H1 (cell line): ENCODE measurements at regions of chr7 and their contacts with region 1.

Region 1: GRCh38 chr7:73522105-73522872 is at the start of gene BAZ1B:
- DNase-seq: peak; percentile 92 to 98
- H3K4me3 ChIP-seq: peak within 1 kb of the TSS; percentile 79 to 91 (median 82)
- H3K27ac ChIP-seq: peak within 1 kb of the TSS; percentile 98
- H3K4me1 ChIP-seq: peaks cover 0 to 5% (median 2%) of the 10 kb centered on the region in 4 experiments; a peak in 2 of 7 replicates
- H3K27me3 ChIP-seq: no peaks in the 10 kb centered on the region
- CTCF ChIP-seq: no peak; a peak in 1 of 4 replicates
- EP300 ChIP-seq: no peak
- POLR2A ChIP-seq: peak; percentile 80 to 85
- RAD21 ChIP-seq: no peak; a peak in 1 of 4 replicates
- total RNA-seq, gene BAZ1B: 83.6 and 86.8 TPM in 2 replicates

Region 2: DNA sequence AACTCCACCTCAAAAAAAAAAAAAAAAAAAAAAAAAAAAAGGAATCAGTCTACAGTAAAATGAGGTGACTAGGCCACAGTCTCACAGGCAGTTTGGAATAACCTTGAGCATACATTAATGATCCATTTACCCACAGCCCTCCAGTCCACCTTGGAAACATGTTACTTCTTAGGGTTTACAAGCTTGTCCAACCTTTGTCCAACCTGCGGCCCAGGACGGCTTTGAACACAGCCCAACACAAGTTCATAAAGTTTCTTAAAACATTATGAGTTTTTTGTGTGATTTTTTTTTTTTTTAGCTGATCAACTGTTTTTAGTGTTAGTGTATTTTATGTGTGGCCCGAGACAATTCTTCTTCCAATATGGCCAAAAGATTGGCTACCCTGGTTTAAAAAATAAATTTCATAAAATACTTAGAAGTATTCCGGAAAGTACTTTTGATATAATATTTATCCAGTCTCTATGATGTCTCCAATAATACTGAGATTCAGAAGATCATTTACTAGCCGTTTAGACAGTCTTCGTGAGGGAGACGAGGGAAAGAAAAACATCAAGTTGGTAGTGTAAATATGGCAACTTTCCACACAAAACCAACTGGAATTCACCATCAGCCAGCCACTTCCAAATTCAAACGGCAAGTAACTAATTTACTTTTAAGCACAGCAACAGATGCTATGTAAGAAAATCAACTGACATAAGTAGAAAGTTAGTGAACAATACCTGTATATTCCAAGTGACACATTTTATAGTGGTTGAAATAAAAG is 10.1 kb before region 1 on chr7:
- CTCF ChIA-PET with region 1: interaction called, 3 read pairs
- POLR2A ChIA-PET with region 1: interaction called, 55 read pairs
- DNase-seq: no peak
- H3K4me3 ChIP-seq: no peak overlapping the region
- H3K27ac ChIP-seq: no peak overlapping the region
- H3K4me1 ChIP-seq: no peaks in the 10 kb centered on the region
- H3K27me3 ChIP-seq: no peaks in the 10 kb centered on the region
- CTCF ChIP-seq: no peak
- EP300 ChIP-seq: no peak
- POLR2A ChIP-seq: no peak
- RAD21 ChIP-seq: no peak

Region 3: GRCh38 chr7:73533742-73534141 is 11.5 kb after region 1 on chr7:
- CTCF ChIA-PET with region 1: no interaction called
- POLR2A ChIA-PET with region 1: interaction called, 32 read pairs
- DNase-seq: no peak
- H3K4me3 ChIP-seq: no peak overlapping the region
- H3K27ac ChIP-seq: no peak overlapping the region; the same call in 1 of the 2 replicates
- H3K4me1 ChIP-seq: no peaks in the 10 kb centered on the region
- H3K27me3 ChIP-seq: no peaks in the 10 kb centered on the region
- CTCF ChIP-seq: no peak
- EP300 ChIP-seq: no peak
- POLR2A ChIP-seq: no peak
- RAD21 ChIP-seq: no peak

Region 4: GRCh38 chr7:73557108-73557396 is 34.8 kb after region 1 on chr7:
- CTCF ChIA-PET with region 1: interaction called, 4 read pairs
- POLR2A ChIA-PET with region 1: interaction called, 31 read pairs
- DNase-seq: peak; percentile 81 to 95
- H3K4me3 ChIP-seq: peak overlapping the region; percentile 68 to 87 (median 76)
- H3K27ac ChIP-seq: peak overlapping the region; percentile 99
- H3K4me1 ChIP-seq: peaks cover 0 to 3% (median 1%) of the 10 kb centered on the region in 4 experiments; a peak in 2 of 7 replicates
- H3K27me3 ChIP-seq: peaks cover 0 to 8% (median 1%) of the 10 kb centered on the region in 4 experiments; a peak in 4 of 7 replicates
- CTCF ChIP-seq: no peak
- EP300 ChIP-seq: no peak
- POLR2A ChIP-seq: 0 out of 3 replicates have a peak, but pooled peaks of 1 of the 2 experiments have one; percentile 7
- RAD21 ChIP-seq: no peak

Region 5: DNA sequence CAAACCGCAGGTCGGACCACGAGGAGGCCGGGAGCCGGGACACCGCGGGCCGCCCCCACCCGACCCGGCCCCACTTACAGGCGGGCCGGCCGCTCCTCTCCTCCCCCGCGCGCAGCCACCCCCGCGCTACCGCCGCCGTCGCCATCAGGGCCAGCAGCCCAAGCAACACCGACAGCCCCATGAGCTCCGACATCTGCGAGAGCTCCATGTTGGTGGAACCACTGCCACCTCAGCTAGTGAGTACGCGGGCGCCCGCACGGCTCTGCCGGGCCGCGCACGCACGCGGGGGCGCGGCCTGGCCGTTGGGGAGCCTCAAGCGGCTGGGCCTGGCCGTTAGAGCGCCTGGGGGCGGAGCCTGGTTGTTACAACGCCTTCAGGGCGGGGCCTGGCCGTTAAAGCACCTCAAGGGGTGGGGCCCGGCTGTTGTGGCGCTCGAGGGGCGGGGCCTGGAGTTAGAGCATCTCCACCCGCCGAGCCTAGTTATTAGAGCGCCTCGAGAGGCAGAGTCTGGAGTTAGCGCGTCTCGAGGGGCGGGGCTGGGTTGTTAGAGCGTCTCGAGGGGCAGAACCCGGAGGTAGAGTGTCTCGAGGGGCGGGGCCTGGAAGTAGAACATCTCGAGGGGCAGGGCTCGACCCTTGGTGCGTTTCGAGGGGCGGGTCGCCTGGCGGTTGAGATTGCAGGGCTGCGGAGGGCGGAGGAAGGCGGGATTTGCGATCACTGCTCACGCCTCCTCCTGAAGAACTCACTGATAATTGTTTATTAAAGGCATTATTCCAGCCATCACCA is 56.2 kb after region 1 on chr7 and contains the start of gene TBL2:
- CTCF ChIA-PET with region 1: interaction called, 7 read pairs
- POLR2A ChIA-PET with region 1: interaction called, 21 read pairs
- DNase-seq: peak; percentile 97 to 99
- H3K4me3 ChIP-seq: peak within 1 kb of the TSS; percentile 74 to 83 (median 79)
- H3K27ac ChIP-seq: no peak within 1 kb of the TSS; the same call in 1 of the 2 replicates
- H3K4me1 ChIP-seq: peaks cover 0 to 3% (median 0%) of the 10 kb centered on the region in 4 experiments; a peak in 2 of 7 replicates
- H3K27me3 ChIP-seq: peaks cover 0 to 16% (median 7%) of the 10 kb centered on the region in 4 experiments; a peak in 6 of 7 replicates
- CTCF ChIP-seq: no peak; a peak in 1 of 4 replicates
- EP300 ChIP-seq: no peak
- POLR2A ChIP-seq: peak; percentile 91 to 97
- RAD21 ChIP-seq: no peak
- total RNA-seq, gene TBL2: 22.5 and 25.8 TPM in 2 replicates

Region 6: GRCh38 chr7:73799267-73800141 is 277.2 kb after region 1 on chr7:
- CTCF ChIA-PET with region 1: no interaction called
- POLR2A ChIA-PET with region 1: no interaction called
- DNase-seq: peak in 1 of 2 experiments; percentile 39
- H3K4me3 ChIP-seq: no peak overlapping the region
- H3K27ac ChIP-seq: no peak overlapping the region
- H3K4me1 ChIP-seq: peaks cover 0 to 6% (median 0%) of the 10 kb centered on the region in 4 experiments; a peak in 1 of 7 replicates
- H3K27me3 ChIP-seq: no peaks in the 10 kb centered on the region
- CTCF ChIP-seq: no peak
- EP300 ChIP-seq: no peak
- POLR2A ChIP-seq: no peak
- RAD21 ChIP-seq: no peak